Posterior vena cava (tissue), 2 donors: ENCODE measurements at regions of chr20 and their contacts with region 1.

Region 1: DNA sequence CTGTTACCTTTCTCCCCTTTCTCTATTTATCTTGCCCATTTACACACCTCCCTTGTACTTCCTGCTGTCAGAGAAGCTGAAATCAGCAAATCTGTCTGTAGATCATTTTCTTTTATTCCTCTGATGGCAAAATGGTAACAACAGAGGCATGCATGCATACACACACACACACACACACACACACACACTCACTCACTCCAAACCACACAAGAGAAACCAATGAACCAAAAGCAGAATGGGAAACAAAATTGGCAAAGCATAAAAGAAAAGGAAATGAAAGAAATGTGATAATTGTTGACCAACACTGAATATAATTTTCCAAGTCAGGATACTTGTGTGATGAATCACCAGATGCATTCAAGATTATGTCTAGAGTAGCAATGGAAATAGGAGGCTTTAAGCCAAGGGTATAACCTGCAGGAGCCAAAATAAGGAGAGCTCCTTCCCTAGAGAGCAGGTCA is 172.4 kb downstream of the PLCB4 start:
- DNase-seq: no peak

Region 2: DNA sequence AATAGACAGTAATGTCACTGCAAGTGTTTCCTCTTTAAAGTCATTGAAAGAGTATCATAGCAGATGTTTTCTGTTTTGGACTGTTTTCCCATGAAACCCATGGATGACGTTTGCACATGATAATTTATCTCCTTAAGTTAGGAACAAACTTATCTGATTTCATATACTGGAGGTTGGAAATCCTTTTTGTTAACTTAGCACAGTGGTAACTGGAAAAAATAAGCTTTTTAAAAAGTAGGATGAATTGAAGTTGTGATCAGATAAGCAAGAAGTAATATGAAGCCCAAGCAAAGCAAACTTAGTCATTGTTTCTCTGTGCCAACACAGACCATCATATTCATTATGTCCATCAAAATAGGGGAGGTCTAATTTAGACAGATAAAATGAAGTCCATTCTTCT is 110.7 kb before region 1 on chr20:
- intact Hi-C with region 1: no loop called
- DNase-seq: no peak

Region 3: GRCh38 chr20:9319687-9320384 is 78.6 kb after region 1 on chr20:
- intact Hi-C with region 1: loop called in 1 of 2 experiments (anchors 10 kb)
- DNase-seq: no peak